ENCODE measurements at regions of chr19 and their contacts with region 1.

Region 1: DNA sequence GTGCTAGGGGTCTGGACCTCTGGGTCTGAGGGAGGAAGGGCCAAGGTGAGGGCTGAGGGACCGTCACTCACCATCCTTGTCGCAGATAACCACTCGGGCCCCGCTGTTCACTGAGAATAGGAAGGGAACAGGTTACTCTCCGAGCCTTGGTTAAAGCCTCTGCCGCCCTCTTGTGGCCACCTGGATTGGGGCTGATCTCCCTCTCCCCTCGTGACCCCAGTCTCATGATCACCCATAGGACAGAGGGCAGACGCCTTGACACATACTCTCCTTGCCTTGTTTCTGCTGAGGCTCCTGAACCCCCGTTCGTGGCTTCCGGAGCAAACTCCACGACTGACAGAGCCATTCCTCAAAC is 580 bp downstream of the HSD17B14 start:
- DNase-seq: peak; percentile 93

Region 2: DNA sequence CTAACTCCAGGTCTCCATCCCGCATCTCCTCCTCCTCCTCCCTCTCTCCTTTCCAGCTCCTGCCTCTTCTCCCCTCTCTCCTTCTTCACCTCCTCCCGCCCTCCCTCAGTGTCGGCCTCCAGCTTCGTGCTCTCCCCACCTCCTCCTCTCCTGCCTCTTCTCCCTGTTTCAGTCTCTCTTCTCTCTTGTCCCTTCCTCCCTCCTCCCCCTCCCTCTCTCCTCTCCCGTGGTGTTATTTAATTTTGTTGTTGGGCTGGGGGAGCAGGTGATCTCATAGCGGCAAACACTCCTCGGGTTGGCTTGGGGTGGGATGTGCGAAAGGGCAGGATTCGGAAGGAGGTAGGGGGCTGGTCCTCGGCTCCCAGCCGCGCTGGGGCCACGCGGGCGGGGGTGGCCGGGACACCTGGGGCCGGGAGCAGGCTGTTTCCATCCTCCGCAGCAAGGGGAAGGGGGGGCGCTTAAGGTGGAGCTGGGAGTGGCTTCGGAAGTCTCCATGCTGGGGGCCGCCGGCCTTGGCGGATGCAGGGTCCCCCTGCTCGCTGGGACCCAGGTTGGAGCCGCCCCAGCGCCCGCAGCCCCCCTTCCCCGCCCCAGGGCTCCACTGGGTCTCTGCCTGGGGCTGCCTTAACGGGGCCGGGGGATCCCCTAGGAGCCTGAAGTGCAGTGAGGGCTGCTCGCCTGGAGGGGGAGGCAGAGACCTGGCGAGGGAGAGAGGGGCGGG is 189.6 kb before region 1 on chr19 and contains the start of gene CA11:
- intact Hi-C with region 1: loop called (anchors 5 kb)
- DNase-seq: peak; percentile 92
- total RNA-seq, gene CA11: 6.5 TPM

Region 3: DNA sequence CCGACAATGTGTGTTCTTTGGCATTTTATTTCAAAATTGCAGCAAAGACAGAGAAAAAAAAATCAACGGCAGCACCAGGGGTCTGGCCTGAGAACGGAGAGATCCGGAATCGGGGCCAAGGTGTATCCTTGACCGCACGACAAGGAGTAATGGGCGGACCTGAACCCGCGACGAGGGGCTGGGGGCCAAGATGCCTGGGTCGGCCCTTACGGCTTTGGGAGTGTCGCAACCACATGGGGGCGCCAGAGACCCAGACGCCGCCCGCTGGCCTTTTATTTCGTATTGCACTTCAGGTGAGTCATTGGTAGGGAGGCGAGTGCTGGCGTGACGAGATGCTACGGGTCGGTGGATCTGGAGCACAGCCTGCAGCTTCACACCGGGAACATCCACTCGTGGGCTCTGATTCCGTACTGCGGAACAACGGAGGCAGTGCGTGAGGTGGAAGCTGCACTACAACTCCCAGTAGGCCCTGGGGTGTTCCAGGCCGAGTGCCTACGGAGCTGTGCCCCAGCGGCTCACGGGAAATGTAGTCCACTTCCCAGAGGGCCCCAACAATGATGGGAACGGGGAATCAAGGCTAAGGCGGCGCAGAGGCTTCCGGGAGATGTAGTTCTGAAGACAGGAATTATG is 40.5 kb before region 1 on chr19:
- intact Hi-C with region 1: loop called (anchors 1 kb)
- DNase-seq: peak; percentile 95

Region 4: GRCh38 chr19:48806518-48806817 is 29.2 kb before region 1 on chr19:
- intact Hi-C with region 1: no loop called
- DNase-seq: no peak

Measured in cardiac septum (tissue), 1 donor.